Activated CD4-positive, alpha-beta memory T cell treated with anti-CD3 and anti-CD28 coated beads for 36 hours (primary cell): ENCODE measurements at regions of chr1 and their contacts with region 1.

Region 1: DNA sequence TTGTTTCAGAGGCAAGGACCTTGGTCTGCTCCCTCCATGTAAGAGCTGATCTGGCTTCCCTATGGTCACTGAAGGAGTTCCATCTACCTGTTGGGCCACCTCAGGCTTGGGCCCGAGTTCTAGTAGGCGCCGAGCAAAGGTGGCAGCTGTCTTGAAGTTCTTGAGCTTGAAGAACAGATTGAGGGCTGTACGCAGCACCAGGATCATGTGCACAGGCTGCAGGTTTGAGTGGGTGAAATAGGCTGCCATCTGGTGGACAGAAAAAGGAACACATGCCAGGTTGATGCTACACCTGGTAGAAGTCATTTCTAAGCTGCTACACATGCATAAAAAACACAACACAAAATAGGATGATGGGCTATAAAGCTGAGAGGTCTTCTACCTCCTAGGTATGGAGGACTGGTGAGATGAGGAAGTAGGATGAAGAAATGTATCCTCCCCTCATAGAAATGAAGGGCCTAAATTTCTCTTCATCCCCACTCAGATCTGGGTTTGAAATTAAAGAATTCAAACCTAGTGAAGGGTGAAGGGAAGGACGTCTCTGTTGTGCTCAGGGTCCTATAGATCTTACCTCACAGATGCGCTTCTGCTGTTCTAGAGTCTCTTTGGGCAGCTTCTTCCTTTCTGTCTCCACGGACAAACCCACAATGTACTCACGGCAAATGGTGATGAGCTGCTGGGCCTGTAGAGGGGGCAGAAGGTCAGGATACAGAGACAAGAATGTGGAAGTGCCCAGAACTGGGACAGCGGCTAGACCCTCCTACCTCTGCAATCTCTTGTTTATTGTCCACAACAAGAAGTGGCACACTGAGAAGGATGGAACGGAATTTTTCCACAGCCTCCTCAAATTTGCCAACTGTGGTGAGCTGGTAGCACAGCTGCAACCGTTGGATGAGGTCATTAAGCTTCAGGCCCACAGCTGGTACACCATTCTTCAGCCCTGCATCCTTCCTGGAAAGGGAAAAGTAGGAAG is 6.6 kb upstream of the PEX19 start:
- DNase-seq: peak; percentile 76
- H3K4me3 Mint-ChIP-seq: no peak overlapping the region
- H3K27ac Mint-ChIP-seq: peak overlapping the region; percentile 47
- H3K4me1 Mint-ChIP-seq: peaks cover 3% of the 10 kb centered on the region
- H3K27me3 Mint-ChIP-seq: no peaks in the 10 kb centered on the region

Region 2: GRCh38 chr1:160108888-160109662 is 182.5 kb before region 1 on chr1:
- CTCF ChIA-PET with region 1: interaction called, 77 read pairs
- POLR2A ChIA-PET with region 1: no interaction called
- intact Hi-C with region 1: no loop called
- DNase-seq: peak; percentile 47
- H3K4me3 Mint-ChIP-seq: no peak overlapping the region
- H3K27ac Mint-ChIP-seq: no peak overlapping the region
- H3K4me1 Mint-ChIP-seq: no peaks in the 10 kb centered on the region
- H3K27me3 Mint-ChIP-seq: peaks cover 3% of the 10 kb centered on the region

Region 3: GRCh38 chr1:160205242-160206035 is 86.1 kb before region 1 on chr1 and contains the start of gene PEA15:
- CTCF ChIA-PET with region 1: interaction called, 70 read pairs
- POLR2A ChIA-PET with region 1: no interaction called
- intact Hi-C with region 1: no loop called
- DNase-seq: peak; percentile 80
- H3K4me3 Mint-ChIP-seq: peak within 1 kb of the TSS; percentile 87
- H3K27ac Mint-ChIP-seq: peak within 1 kb of the TSS; percentile 82
- H3K4me1 Mint-ChIP-seq: peaks cover 54% of the 10 kb centered on the region
- H3K27me3 Mint-ChIP-seq: no peaks in the 10 kb centered on the region
- total RNA-seq, gene PEA15: 51.8 to 51.9 TPM

Region 4: DNA sequence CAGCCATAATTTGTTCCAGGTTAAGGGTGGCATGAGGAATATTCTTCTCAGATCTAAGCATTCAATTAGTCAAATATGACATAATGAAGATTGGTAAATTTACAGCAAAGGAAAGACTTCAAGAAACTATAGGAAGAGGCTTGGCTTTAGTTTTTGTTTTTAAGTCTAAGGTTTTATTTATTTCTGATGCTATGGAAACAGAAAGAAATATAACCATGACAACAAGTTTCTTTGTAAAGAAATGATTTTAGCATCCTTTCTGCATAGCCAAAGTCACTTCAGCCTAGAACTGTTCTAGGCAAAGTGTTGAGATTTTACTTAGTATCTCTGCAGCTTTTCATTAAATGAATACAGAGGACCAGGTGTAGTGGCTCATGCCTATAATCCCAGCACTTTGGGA is 58.6 kb before region 1 on chr1:
- CTCF ChIA-PET with region 1: interaction called, 36 read pairs
- POLR2A ChIA-PET with region 1: no interaction called
- intact Hi-C with region 1: no loop called
- DNase-seq: no peak
- H3K4me3 Mint-ChIP-seq: no peak overlapping the region
- H3K27ac Mint-ChIP-seq: no peak overlapping the region
- H3K4me1 Mint-ChIP-seq: peaks cover 16% of the 10 kb centered on the region
- H3K27me3 Mint-ChIP-seq: no peaks in the 10 kb centered on the region

Region 5: GRCh38 chr1:160261893-160262794 is 29.4 kb before region 1 on chr1 and contains the start of gene DCAF8:
- CTCF ChIA-PET with region 1: interaction called, 60 read pairs
- POLR2A ChIA-PET with region 1: interaction called, 5 read pairs
- intact Hi-C with region 1: no loop called
- DNase-seq: peak; percentile 99
- H3K4me3 Mint-ChIP-seq: peak within 1 kb of the TSS; percentile 96
- H3K27ac Mint-ChIP-seq: peak within 1 kb of the TSS; percentile 99
- H3K4me1 Mint-ChIP-seq: peaks cover 45% of the 10 kb centered on the region
- H3K27me3 Mint-ChIP-seq: no peaks in the 10 kb centered on the region
- total RNA-seq, gene DCAF8: 142 to 150 TPM

Region 6: GRCh38 chr1:160315359-160315758 is 23.8 kb after region 1 on chr1:
- CTCF ChIA-PET with region 1: interaction called, 18 read pairs
- POLR2A ChIA-PET with region 1: no interaction called
- intact Hi-C with region 1: no loop called
- DNase-seq: no peak
- H3K4me3 Mint-ChIP-seq: no peak overlapping the region
- H3K27ac Mint-ChIP-seq: peak overlapping the region; percentile 31
- H3K4me1 Mint-ChIP-seq: peaks cover 21% of the 10 kb centered on the region
- H3K27me3 Mint-ChIP-seq: no peaks in the 10 kb centered on the region

Region 7: GRCh38 chr1:160376525-160377131 is 85.1 kb after region 1 on chr1:
- CTCF ChIA-PET with region 1: interaction called, 47 read pairs
- POLR2A ChIA-PET with region 1: no interaction called
- intact Hi-C with region 1: no loop called
- DNase-seq: peak; percentile 33
- H3K4me3 Mint-ChIP-seq: no peak overlapping the region
- H3K27ac Mint-ChIP-seq: no peak overlapping the region
- H3K4me1 Mint-ChIP-seq: peaks cover 11% of the 10 kb centered on the region
- H3K27me3 Mint-ChIP-seq: no peaks in the 10 kb centered on the region